Motor neuron (in vitro differentiated cells): ENCODE measurements at regions of chr11 and their contacts with region 1.

Region 1: GRCh38 chr11:4187055-4187988 is 92.7 kb downstream of the RRM1 start:
- ATAC-seq: peak; percentile 91 to 97 (median 95)
- H3K4me3 ChIP-seq: peak overlapping the region; percentile 51 to 80 (median 57)
- H3K27ac ChIP-seq: peak overlapping the region in 1 of 2 donors; percentile 34
- H3K4me1 ChIP-seq: no peaks in the 10 kb centered on the region

Region 2: GRCh38 chr11:3709977-3710376 is 477.3 kb before region 1 on chr11:
- in situ Hi-C with region 1: no loop called
- ATAC-seq: no peak
- H3K4me3 ChIP-seq: no peak overlapping the region
- H3K27ac ChIP-seq: no peak overlapping the region
- H3K4me1 ChIP-seq: no peaks in the 10 kb centered on the region

Region 3: DNA sequence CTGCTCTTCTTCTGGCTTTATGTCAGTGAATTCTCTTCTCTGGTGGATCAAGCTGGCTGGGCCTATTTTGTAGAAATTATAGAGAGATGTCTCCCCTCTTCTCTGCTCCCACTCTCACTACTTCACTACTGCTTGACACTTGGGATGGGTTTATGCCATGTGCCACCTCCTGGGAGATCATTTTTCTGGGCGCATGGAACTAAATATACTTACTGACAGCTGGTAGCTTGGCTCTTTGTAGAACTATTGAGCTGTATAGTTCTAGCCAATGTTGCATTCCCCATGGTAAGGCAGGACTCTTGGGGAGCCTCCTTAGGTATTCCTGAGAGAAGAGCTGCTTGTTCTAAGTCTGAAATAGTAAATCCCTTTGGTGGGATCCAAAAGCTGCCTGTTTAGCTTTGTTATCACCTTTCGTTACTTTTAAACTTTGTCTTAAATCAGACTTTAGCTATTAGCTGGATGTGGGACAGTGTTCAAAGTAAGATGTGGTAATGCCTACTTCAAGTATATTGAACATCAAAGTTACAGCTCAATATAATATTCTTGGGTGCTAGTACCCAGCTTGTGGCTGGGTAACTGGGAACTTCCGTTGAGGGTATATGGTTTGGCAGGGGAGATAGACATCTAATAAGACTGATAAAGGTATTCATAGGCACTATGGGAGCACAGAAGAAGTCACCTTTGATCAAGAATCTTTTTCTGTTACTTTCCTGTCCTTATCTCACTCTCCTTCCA is 180.2 kb before region 1 on chr11:
- in situ Hi-C with region 1: no loop called
- ATAC-seq: no peak
- H3K4me3 ChIP-seq: no peak overlapping the region
- H3K27ac ChIP-seq: no peak overlapping the region
- H3K4me1 ChIP-seq: no peaks in the 10 kb centered on the region

Region 4: GRCh38 chr11:4368286-4368685 is 181.0 kb after region 1 on chr11 and contains the start of gene OR52B4:
- in situ Hi-C with region 1: no loop called
- ATAC-seq: no peak
- H3K4me3 ChIP-seq: no peak within 1 kb of the TSS
- H3K27ac ChIP-seq: no peak within 1 kb of the TSS
- H3K4me1 ChIP-seq: no peaks in the 10 kb centered on the region
- total RNA-seq, gene OR52B4: 0.62 TPM in 1 of 8 experiments, not detected in the others

Region 5: GRCh38 chr11:4539603-4540219 is 352.4 kb after region 1 on chr11:
- in situ Hi-C with region 1: loop called in 3 of 9 experiments (anchors 25 kb)
- ATAC-seq: peak in 4 of 8 experiments; percentile 32 to 89 (median 76)
- H3K4me3 ChIP-seq: no peak overlapping the region
- H3K27ac ChIP-seq: no peak overlapping the region
- H3K4me1 ChIP-seq: no peaks in the 10 kb centered on the region